ENCODE measurements at regions of chr1 and their contacts with region 1.

Region 1: DNA sequence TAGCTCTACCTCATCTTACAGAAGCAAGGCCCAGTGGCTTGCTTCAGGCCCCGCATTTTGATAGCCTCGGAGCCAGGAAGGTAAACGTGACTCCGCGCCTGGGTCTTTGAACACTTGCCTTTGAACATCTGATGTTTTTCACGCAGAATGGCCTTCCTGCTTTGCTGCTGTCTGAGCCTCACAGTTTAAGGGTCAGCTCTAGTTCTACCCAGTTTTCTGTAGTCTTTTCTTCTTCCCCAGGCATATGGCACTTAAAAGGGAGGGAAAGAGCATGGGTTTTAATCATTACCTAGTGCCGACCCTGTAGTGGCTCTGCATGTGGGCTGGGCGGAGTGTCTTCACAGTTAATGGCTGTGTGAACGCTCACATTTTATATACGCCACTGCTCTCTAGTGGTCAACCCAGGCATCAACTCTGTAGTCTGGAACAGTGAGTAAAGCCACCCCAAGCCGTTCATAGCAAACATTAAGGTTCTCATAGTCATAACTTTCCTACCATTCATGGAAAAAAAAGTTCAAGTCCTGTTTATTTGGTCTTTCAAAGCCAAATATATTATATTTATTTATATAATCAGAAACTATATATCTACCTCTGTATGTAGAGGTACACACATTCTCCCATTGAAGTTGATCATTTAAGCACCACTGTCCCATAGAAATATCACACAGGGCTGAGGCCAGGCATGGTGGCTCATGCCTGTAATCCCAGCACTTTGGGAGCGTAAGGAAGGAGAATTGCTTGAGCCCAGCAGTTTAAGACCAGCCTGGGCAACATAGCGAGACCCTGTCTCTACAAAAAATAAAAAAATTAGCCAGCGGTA is 78.1 kb downstream of the IER5 start:
- DNase-seq: peak; percentile 72 to 78 (median 76)
- H3K4me3 ChIP-seq: no peak overlapping the region
- H3K4me3 Mint-ChIP-seq: peak overlapping the region in 7 of 8 donors; percentile 41 to 84 (median 72)
- H3K27ac ChIP-seq: no peak overlapping the region
- H3K27ac Mint-ChIP-seq: peak overlapping the region; percentile 57 to 88 (median 76)
- H3K4me1 ChIP-seq: peaks cover 6% of the 10 kb centered on the region
- H3K4me1 Mint-ChIP-seq: peaks cover 5 to 8% (median 6%) of the 10 kb centered on the region in 4 donors
- H3K27me3 ChIP-seq: no peaks in the 10 kb centered on the region
- H3K27me3 Mint-ChIP-seq: no peaks in the 10 kb centered on the region

Region 2: GRCh38 chr1:180515864-180516388 is 650.7 kb before region 1 on chr1:
- CTCF ChIA-PET with region 1: interaction called, 6 read pairs
- POLR2A ChIA-PET with region 1: no interaction called
- intact Hi-C with region 1: loop called (anchors 1 kb)
- DNase-seq: peak; percentile 48 to 62 (median 55)
- H3K4me3 ChIP-seq: no peak overlapping the region
- H3K4me3 Mint-ChIP-seq: no peak overlapping the region
- H3K27ac ChIP-seq: no peak overlapping the region
- H3K27ac Mint-ChIP-seq: no peak overlapping the region
- H3K4me1 ChIP-seq: peaks cover 3% of the 10 kb centered on the region
- H3K4me1 Mint-ChIP-seq: peaks cover 0 to 2% (median 1%) of the 10 kb centered on the region in 4 donors
- H3K27me3 ChIP-seq: no peaks in the 10 kb centered on the region
- H3K27me3 Mint-ChIP-seq: peaks cover 4% of the 10 kb centered on the region in 2 donors

Region 3: DNA sequence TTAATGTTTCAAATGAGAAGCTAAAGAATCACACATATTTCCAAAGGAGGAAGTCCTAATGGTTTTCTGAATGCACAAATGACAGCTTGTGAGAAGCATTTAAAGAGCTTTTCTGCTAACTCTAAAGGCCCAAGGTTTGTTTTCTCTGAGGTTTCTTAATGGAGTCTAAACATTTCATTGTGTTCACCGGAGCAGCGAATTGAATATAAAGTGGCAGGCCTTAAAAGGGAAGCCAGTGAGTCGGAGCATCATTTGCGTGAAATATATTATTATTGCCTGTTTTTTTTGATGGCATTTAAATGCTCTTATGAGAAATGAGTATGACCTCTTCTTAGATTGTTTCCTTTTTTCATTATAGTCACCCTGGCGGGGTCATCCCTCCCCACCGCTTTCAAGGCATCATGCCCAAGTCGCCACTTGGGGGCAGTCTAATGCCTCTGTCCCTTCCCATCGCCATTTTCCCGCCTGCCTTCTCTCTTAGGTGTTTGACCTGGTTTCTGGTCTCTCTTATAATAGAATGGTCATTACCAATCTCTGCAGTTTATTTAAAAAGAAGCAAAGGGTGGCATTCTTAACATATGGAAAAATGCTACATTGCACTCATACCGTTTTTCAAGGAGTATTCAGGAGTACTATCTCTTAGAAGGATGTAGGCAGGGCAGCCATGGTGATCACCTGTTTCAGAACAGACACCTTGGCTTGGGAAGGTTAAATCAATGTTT is 633.2 kb before region 1 on chr1:
- CTCF ChIA-PET with region 1: interaction called, 3 read pairs
- POLR2A ChIA-PET with region 1: no interaction called
- intact Hi-C with region 1: loop called (anchors 1 kb)
- DNase-seq: peak; percentile 40 to 58 (median 45)
- H3K4me3 ChIP-seq: no peak overlapping the region
- H3K4me3 Mint-ChIP-seq: peak overlapping the region in 1 of 8 donors; percentile 24
- H3K27ac ChIP-seq: no peak overlapping the region
- H3K27ac Mint-ChIP-seq: peak overlapping the region in 1 of 7 donors; percentile 20
- H3K4me1 ChIP-seq: no peaks in the 10 kb centered on the region
- H3K4me1 Mint-ChIP-seq: no peaks in the 10 kb centered on the region
- H3K27me3 ChIP-seq: no peaks in the 10 kb centered on the region
- H3K27me3 Mint-ChIP-seq: peaks cover 0 to 3% of the 10 kb centered on the region in 2 donors

Region 4: GRCh38 chr1:180672105-180672504 is 494.5 kb before region 1 on chr1:
- CTCF ChIA-PET with region 1: no interaction called
- POLR2A ChIA-PET with region 1: no interaction called
- intact Hi-C with region 1: no loop called
- DNase-seq: no peak
- H3K4me3 ChIP-seq: no peak overlapping the region
- H3K4me3 Mint-ChIP-seq: no peak overlapping the region
- H3K27ac ChIP-seq: no peak overlapping the region
- H3K27ac Mint-ChIP-seq: no peak overlapping the region
- H3K4me1 ChIP-seq: no peaks in the 10 kb centered on the region
- H3K4me1 Mint-ChIP-seq: peaks cover 5 to 17% (median 10%) of the 10 kb centered on the region in 4 donors
- H3K27me3 ChIP-seq: no peaks in the 10 kb centered on the region
- H3K27me3 Mint-ChIP-seq: no peaks in the 10 kb centered on the region

Region 5: GRCh38 chr1:180881806-180882509 is 284.6 kb before region 1 on chr1:
- CTCF ChIA-PET with region 1: interaction called, 6 read pairs
- POLR2A ChIA-PET with region 1: no interaction called
- intact Hi-C with region 1: loop called (anchors 1 kb)
- DNase-seq: peak in 1 of 5 donors; percentile 4
- H3K4me3 ChIP-seq: no peak overlapping the region
- H3K4me3 Mint-ChIP-seq: no peak overlapping the region
- H3K27ac ChIP-seq: no peak overlapping the region
- H3K27ac Mint-ChIP-seq: no peak overlapping the region
- H3K4me1 ChIP-seq: no peaks in the 10 kb centered on the region
- H3K4me1 Mint-ChIP-seq: no peaks in the 10 kb centered on the region
- H3K27me3 ChIP-seq: no peaks in the 10 kb centered on the region
- H3K27me3 Mint-ChIP-seq: no peaks in the 10 kb centered on the region

Region 6: GRCh38 chr1:181152892-181153633 is 13.5 kb before region 1 on chr1:
- CTCF ChIA-PET with region 1: interaction called, 262 read pairs
- POLR2A ChIA-PET with region 1: interaction called, 71 read pairs
- intact Hi-C with region 1: loop called (anchors 1 kb)
- DNase-seq: no peak
- H3K4me3 ChIP-seq: no peak overlapping the region
- H3K4me3 Mint-ChIP-seq: no peak overlapping the region
- H3K27ac ChIP-seq: no peak overlapping the region
- H3K27ac Mint-ChIP-seq: peak overlapping the region in 2 of 7 donors; percentile 23 to 62
- H3K4me1 ChIP-seq: peaks cover 56% of the 10 kb centered on the region
- H3K4me1 Mint-ChIP-seq: peaks cover 37 to 61% (median 49%) of the 10 kb centered on the region in 4 donors
- H3K27me3 ChIP-seq: no peaks in the 10 kb centered on the region
- H3K27me3 Mint-ChIP-seq: no peaks in the 10 kb centered on the region

Region 7: DNA sequence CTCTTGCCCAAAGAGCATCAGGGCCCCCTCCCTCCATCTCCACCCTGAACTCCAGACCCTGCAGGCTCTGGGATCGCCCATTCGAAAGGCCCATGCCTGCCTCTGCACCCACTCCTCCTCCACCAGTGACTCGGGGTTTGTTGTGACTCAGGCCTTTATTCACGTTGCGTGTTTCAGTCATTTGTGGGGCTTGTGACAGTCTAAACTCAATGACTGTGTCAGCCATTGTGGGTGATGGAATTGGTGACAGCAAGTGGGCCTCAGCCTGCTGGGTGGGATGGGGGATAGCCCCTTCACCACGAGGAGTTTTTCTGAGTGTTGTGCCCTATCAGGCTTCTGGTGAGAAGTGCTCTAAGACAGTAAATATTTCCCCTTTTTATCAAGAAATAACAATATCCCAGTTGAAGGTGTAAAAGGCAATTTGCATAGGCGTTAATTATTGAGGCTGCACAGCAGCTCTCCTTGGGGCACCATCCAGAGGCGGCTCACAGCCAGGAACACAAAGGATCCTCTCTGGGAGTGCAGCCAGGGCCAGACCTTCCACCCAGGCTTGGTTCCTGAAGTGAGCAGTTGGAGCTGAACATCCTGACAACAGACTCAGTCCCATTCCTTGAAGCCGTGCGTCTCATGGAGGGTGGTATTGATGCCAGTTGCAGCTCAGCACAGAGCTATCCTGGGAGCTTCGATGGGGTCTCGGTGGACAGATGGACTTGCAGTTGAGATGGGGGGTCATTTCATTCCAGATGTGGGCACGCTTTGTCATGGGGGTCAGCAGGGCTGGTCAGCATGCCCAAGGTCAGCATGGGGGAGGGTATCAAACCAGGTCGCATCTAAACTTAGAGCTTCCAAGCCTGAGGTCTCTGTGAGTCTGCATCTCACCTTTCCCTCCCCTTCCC is 181.2 kb after region 1 on chr1:
- CTCF ChIA-PET with region 1: no interaction called
- POLR2A ChIA-PET with region 1: no interaction called
- intact Hi-C with region 1: no loop called
- DNase-seq: no peak
- H3K4me3 ChIP-seq: no peak overlapping the region
- H3K4me3 Mint-ChIP-seq: no peak overlapping the region
- H3K27ac ChIP-seq: no peak overlapping the region
- H3K27ac Mint-ChIP-seq: peak overlapping the region in 1 of 7 donors; percentile 3
- H3K4me1 ChIP-seq: no peaks in the 10 kb centered on the region
- H3K4me1 Mint-ChIP-seq: peaks cover 5 to 10% (median 7%) of the 10 kb centered on the region in 4 donors
- H3K27me3 ChIP-seq: no peaks in the 10 kb centered on the region
- H3K27me3 Mint-ChIP-seq: peaks cover 0 to 4% of the 10 kb centered on the region in 2 donors

Region 8: GRCh38 chr1:181443231-181443853 is 276.8 kb after region 1 on chr1:
- CTCF ChIA-PET with region 1: no interaction called
- POLR2A ChIA-PET with region 1: no interaction called
- intact Hi-C with region 1: no loop called
- DNase-seq: no peak
- H3K4me3 ChIP-seq: no peak overlapping the region
- H3K4me3 Mint-ChIP-seq: no peak overlapping the region
- H3K27ac ChIP-seq: no peak overlapping the region
- H3K27ac Mint-ChIP-seq: no peak overlapping the region
- H3K4me1 ChIP-seq: no peaks in the 10 kb centered on the region
- H3K4me1 Mint-ChIP-seq: no peaks in the 10 kb centered on the region
- H3K27me3 ChIP-seq: no peaks in the 10 kb centered on the region
- H3K27me3 Mint-ChIP-seq: peaks cover 2 to 3% of the 10 kb centered on the region in 2 donors